T-cell (primary cell): ENCODE measurements at regions of chr17 and their contacts with region 1.

Region 1: GRCh38 chr17:27817731-27818130 is 17.4 kb upstream of the NOS2 start:
- DNase-seq: no peak
- ATAC-seq: no peak
- H3K4me3 ChIP-seq: no peak overlapping the region
- H3K4me3 Mint-ChIP-seq: no peak overlapping the region
- H3K27ac ChIP-seq: no peak overlapping the region
- H3K27ac Mint-ChIP-seq: no peak overlapping the region
- H3K4me1 ChIP-seq: no peaks in the 10 kb centered on the region
- H3K4me1 Mint-ChIP-seq: no peaks in the 10 kb centered on the region
- H3K27me3 ChIP-seq: no peaks in the 10 kb centered on the region
- H3K27me3 Mint-ChIP-seq: peaks cover 0 to 3% of the 10 kb centered on the region in 2 donors

Region 2: DNA sequence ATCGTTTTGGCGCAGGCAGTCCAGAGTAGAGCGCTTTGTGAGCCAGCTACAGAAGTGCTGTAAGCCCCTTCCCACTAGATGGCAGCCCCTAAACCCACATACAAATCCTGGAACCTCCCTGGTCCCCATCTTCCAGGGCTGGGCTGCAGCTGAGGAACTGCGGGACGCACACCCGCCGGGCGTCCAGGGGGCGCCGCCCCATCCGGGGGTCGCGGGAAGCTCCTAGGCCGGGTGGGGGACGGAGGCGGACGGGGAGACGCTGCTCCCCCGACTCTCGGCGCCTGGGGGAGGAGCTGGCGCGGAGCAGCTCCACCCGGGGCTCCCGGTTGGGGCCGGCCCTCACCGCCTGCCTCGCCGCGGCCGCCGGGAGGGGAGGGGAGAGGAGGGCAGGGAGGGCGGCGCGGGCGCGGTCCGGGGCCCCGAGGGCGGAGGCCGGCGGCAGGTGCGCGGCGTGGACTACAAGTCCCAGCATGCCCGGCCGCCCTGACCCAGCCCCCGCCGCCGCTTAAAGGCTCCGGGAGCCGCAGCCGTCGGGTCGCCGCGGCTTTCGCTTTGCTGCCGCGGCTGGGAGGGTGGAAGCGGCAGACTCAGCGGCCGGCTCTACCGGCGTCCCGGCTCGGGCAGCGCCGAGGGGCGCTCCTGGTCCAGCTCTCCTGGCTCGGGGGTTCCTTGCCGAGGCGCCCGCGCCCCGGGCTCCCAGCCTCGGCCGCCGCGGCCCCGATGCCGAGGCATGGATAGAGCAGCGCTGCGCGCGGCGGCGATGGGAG is 361.6 kb before region 1 on chr17 and contains the start of gene KSR1:
- CTCF ChIA-PET with region 1: no interaction called
- POLR2A ChIA-PET with region 1: no interaction called
- DNase-seq: peak; percentile 59 to 88 (median 72)
- ATAC-seq: peak; percentile 93 to 96 (median 94)
- H3K4me3 ChIP-seq: peak within 1 kb of the TSS; percentile 60 to 74
- H3K4me3 Mint-ChIP-seq: peak within 1 kb of the TSS; percentile 81 to 95 (median 91)
- H3K27ac ChIP-seq: peak within 1 kb of the TSS; percentile 47
- H3K27ac Mint-ChIP-seq: peak within 1 kb of the TSS; percentile 49 to 83
- H3K4me1 ChIP-seq: peaks cover 0 to 25% of the 10 kb centered on the region in 2 experiments
- H3K4me1 Mint-ChIP-seq: peaks cover 17 to 31% (median 23%) of the 10 kb centered on the region in 3 donors
- H3K27me3 ChIP-seq: peaks cover 0 to 2% of the 10 kb centered on the region in 2 experiments
- H3K27me3 Mint-ChIP-seq: no peaks in the 10 kb centered on the region
- total RNA-seq, gene KSR1: 26.8 to 35.8 (median 27.6) TPM

Region 3: DNA sequence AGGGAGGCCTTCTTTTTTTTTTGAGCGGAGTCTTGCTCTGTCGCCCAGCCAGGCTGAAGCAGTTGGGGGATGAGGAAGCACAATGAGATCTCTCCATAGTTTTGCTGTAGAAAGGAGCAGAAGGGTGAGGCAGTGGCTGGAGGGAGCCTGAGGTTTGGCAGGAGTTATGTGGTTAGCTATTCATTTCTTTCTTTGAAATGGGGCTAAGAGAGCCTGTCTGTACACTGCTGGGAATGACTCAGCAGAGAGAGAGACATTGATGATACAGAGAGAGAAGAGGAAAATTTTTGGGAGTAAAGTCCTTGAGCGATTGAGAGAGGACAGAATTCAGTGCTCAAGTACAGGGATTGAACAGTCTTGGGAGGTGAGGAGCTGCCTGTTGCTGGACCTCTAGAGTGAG is 39.5 kb before region 1 on chr17:
- CTCF ChIA-PET with region 1: no interaction called
- POLR2A ChIA-PET with region 1: no interaction called
- DNase-seq: no peak
- ATAC-seq: no peak
- H3K4me3 ChIP-seq: no peak overlapping the region
- H3K4me3 Mint-ChIP-seq: no peak overlapping the region
- H3K27ac ChIP-seq: no peak overlapping the region
- H3K27ac Mint-ChIP-seq: no peak overlapping the region
- H3K4me1 ChIP-seq: no peaks in the 10 kb centered on the region
- H3K4me1 Mint-ChIP-seq: no peaks in the 10 kb centered on the region
- H3K27me3 ChIP-seq: peaks cover 0 to 7% of the 10 kb centered on the region in 2 experiments
- H3K27me3 Mint-ChIP-seq: peaks cover 0 to 6% of the 10 kb centered on the region in 2 donors

Region 4: GRCh38 chr17:28018439-28019070 is 200.8 kb after region 1 on chr17:
- CTCF ChIA-PET with region 1: interaction called in 1 of 2 experiments, 12 read pairs
- POLR2A ChIA-PET with region 1: no interaction called
- DNase-seq: no peak
- ATAC-seq: no peak
- H3K4me3 ChIP-seq: no peak overlapping the region
- H3K4me3 Mint-ChIP-seq: no peak overlapping the region
- H3K27ac ChIP-seq: no peak overlapping the region
- H3K27ac Mint-ChIP-seq: no peak overlapping the region
- H3K4me1 ChIP-seq: no peaks in the 10 kb centered on the region
- H3K4me1 Mint-ChIP-seq: no peaks in the 10 kb centered on the region
- H3K27me3 ChIP-seq: peaks cover 0 to 17% of the 10 kb centered on the region in 2 experiments
- H3K27me3 Mint-ChIP-seq: peaks cover 17 to 29% of the 10 kb centered on the region in 2 donors